A673 (cell line): ENCODE measurements at regions of chr10 and their contacts with region 1.

Region 1: GRCh38 chr10:117094856-117095255 is 43.2 kb downstream of the VAX1 start:
- DNase-seq: no peak
- H3K4me3 ChIP-seq: no peak overlapping the region
- H3K27ac ChIP-seq: peak overlapping the region; percentile 95
- H3K4me1 ChIP-seq: peaks cover 79% of the 10 kb centered on the region
- H3K27me3 ChIP-seq: no peaks in the 10 kb centered on the region
- CTCF ChIP-seq: no peak

Region 2: GRCh38 chr10:116796910-116797513 is 297.8 kb before region 1 on chr10:
- CTCF ChIA-PET with region 1: no interaction called
- POLR2A ChIA-PET with region 1: no interaction called
- intact Hi-C with region 1: loop called (anchors 5 kb)
- DNase-seq: peak; percentile 93
- H3K4me3 ChIP-seq: no peak overlapping the region
- H3K27ac ChIP-seq: no peak overlapping the region
- H3K4me1 ChIP-seq: peaks cover 24% of the 10 kb centered on the region
- H3K27me3 ChIP-seq: no peaks in the 10 kb centered on the region
- CTCF ChIP-seq: peak; percentile 97

Region 3: GRCh38 chr10:116891208-116891607 is 203.6 kb before region 1 on chr10:
- CTCF ChIA-PET with region 1: no interaction called
- POLR2A ChIA-PET with region 1: no interaction called
- intact Hi-C with region 1: loop called (anchors 2 kb)
- DNase-seq: peak; percentile 97
- H3K4me3 ChIP-seq: no peak overlapping the region
- H3K27ac ChIP-seq: peak overlapping the region; percentile 46
- H3K4me1 ChIP-seq: peaks cover 63% of the 10 kb centered on the region
- H3K27me3 ChIP-seq: no peaks in the 10 kb centered on the region
- CTCF ChIP-seq: no peak

Region 4: DNA sequence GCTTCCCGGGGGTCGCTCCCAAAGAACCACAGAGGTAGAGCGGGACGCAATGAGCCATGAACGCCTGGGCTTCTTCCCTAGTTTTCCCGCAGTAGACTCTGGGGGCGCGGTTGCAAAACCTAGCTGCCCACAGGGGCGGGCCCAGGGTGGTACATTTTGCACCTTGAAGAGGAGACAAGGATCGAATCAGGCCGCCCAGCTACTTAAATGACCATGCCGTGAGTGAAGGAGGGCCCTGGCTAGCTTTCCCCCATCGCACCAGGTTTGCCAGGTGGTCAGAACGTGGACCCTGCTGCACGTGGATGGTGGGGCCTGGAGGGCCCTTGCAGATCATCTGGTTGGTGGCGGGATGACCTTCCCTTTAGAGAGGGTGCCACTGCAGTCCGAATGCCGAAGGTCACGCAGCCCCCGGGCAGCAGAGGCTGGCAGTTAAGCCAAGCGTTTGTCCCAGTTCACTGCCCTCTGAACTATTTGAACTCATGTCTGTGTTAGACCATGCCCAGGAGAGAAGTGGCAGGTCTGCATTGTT is 89.3 kb before region 1 on chr10:
- CTCF ChIA-PET with region 1: no interaction called
- POLR2A ChIA-PET with region 1: no interaction called
- intact Hi-C with region 1: no loop called
- DNase-seq: peak; percentile 69
- H3K4me3 ChIP-seq: peak overlapping the region; percentile 97
- H3K27ac ChIP-seq: peak overlapping the region; percentile 78
- H3K4me1 ChIP-seq: peaks cover 35% of the 10 kb centered on the region
- H3K27me3 ChIP-seq: no peaks in the 10 kb centered on the region
- CTCF ChIP-seq: peak; percentile 40

Region 5: GRCh38 chr10:117134083-117135025 is 39.5 kb after region 1 on chr10:
- CTCF ChIA-PET with region 1: interaction called, 6 read pairs
- POLR2A ChIA-PET with region 1: interaction called, 3 read pairs
- intact Hi-C with region 1: loop called (anchors 1 kb)
- DNase-seq: peak; percentile 98
- H3K4me3 ChIP-seq: peak overlapping the region; percentile 97
- H3K27ac ChIP-seq: peak overlapping the region; percentile 100
- H3K4me1 ChIP-seq: peaks cover 71% of the 10 kb centered on the region
- H3K27me3 ChIP-seq: no peaks in the 10 kb centered on the region
- CTCF ChIP-seq: peak; percentile 48

Region 6: GRCh38 chr10:117162093-117163021 is 67.5 kb after region 1 on chr10:
- CTCF ChIA-PET with region 1: interaction called, 8 read pairs
- POLR2A ChIA-PET with region 1: interaction called, 10 read pairs
- intact Hi-C with region 1: loop called (anchors 2 kb)
- DNase-seq: peak; percentile 52
- H3K4me3 ChIP-seq: peak overlapping the region; percentile 55
- H3K27ac ChIP-seq: peak overlapping the region; percentile 73
- H3K4me1 ChIP-seq: peaks cover 58% of the 10 kb centered on the region
- H3K27me3 ChIP-seq: no peaks in the 10 kb centered on the region
- CTCF ChIP-seq: no peak

Region 7: GRCh38 chr10:117167789-117168674 is 73.2 kb after region 1 on chr10:
- CTCF ChIA-PET with region 1: interaction called, 8 read pairs
- POLR2A ChIA-PET with region 1: interaction called, 5 read pairs
- intact Hi-C with region 1: loop called (anchors 2 kb)
- DNase-seq: peak; percentile 84
- H3K4me3 ChIP-seq: peak overlapping the region; percentile 55
- H3K27ac ChIP-seq: peak overlapping the region; percentile 73
- H3K4me1 ChIP-seq: peaks cover 36% of the 10 kb centered on the region
- H3K27me3 ChIP-seq: no peaks in the 10 kb centered on the region
- CTCF ChIP-seq: peak; percentile 96

Region 8: DNA sequence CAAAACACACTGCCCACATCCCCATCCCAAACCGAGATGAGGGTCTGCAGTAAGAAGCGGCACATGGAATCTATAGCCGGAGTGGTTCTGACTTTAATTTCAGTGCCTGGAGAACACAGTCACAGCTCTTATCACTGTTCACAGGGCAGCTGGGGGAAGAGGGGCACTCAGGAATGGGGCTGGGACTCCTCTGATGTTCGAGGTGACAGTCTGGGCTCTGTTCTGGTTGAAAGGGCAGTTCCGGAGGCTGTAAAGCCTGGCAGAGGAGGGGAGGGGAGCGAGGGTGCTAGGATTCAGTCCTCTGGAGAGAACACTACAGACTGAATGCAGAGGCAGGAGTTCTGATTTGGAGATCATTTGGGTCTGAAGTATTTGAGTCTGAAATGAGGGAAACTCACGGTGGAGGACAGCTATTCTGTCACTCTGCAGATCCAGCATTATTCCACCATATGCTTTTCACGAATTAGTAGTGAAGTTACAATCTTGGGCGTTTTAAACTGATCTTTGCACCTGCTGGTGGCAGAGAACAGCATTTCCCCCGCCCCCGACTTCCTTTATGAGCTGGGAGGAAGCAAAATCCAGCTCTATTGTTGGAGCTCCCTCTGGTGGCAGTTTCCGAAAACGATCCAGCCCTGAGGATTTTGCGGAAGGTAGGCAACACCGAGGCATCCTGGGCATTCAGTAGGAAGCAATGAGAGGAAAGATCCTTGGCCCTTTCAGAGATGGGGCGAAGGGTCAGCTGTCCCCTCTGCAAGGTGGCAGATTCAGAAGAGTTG is 79.8 kb after region 1 on chr10:
- CTCF ChIA-PET with region 1: interaction called, 5 read pairs
- POLR2A ChIA-PET with region 1: interaction called, 3 read pairs
- intact Hi-C with region 1: loop called (anchors 2 kb)
- DNase-seq: peak; percentile 96
- H3K4me3 ChIP-seq: peak overlapping the region; percentile 51
- H3K27ac ChIP-seq: peak overlapping the region; percentile 65
- H3K4me1 ChIP-seq: peaks cover 15% of the 10 kb centered on the region
- H3K27me3 ChIP-seq: no peaks in the 10 kb centered on the region
- CTCF ChIP-seq: peak; percentile 93